Activated CD4-positive, alpha-beta memory T cell treated with anti-CD3 and anti-CD28 coated beads for 36 hours (primary cell): ENCODE measurements at regions of chr7 and their contacts with region 1.

Region 1: GRCh38 chr7:6435486-6436384 is 12.0 kb downstream of the DAGLB start:
- DNase-seq: peak; percentile 92
- H3K4me3 Mint-ChIP-seq: peak overlapping the region; percentile 28
- H3K27ac Mint-ChIP-seq: peak overlapping the region; percentile 69
- H3K4me1 Mint-ChIP-seq: peaks cover 33% of the 10 kb centered on the region
- H3K27me3 Mint-ChIP-seq: no peaks in the 10 kb centered on the region

Region 2: DNA sequence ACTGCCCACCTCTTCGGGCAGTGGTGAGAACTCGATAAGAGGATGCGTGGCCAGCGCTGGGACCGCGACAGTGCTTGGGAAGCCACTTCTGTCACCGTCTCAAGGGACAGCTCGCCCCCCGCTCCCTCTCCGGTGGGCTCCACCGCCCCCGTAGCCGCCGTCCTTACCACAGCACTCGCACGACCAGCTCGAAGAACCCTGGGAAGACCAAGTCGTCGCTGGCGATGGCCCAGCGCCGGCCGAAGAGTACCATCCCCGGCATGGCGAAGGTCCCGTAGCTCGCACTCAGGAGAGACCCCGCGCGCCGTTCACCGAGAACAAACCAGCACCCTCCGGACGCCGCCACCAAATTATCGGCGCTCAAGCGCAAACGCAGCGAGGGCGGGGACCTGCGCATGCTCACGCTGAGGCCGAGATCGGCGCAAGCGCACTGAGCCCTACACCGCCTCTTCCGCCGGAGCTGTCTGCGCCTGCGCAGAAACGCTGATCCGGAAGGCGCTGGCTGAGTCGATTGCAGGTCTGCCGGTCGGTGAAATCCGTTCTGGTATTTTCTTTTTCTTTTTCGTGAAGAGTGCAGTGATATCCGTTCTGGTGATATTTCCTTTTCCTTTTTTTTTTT is 12.0 kb after region 1 on chr7 and contains the start of gene DAGLB:
- CTCF ChIA-PET with region 1: interaction called, 11 read pairs
- POLR2A ChIA-PET with region 1: interaction called, 6 read pairs
- intact Hi-C with region 1: loop called (anchors 1 kb)
- DNase-seq: peak; percentile 97
- H3K4me3 Mint-ChIP-seq: peak within 1 kb of the TSS; percentile 93
- H3K27ac Mint-ChIP-seq: peak within 1 kb of the TSS; percentile 91
- H3K4me1 Mint-ChIP-seq: peaks cover 27% of the 10 kb centered on the region
- H3K27me3 Mint-ChIP-seq: no peaks in the 10 kb centered on the region
- total RNA-seq, gene DAGLB: 12.8 to 13.6 TPM